Activated CD4-positive, alpha-beta memory T cell treated with anti-CD3 and anti-CD28 coated beads for 36 hours (primary cell): ENCODE measurements at regions of chr4 and their contacts with region 1.

Region 1: GRCh38 chr4:75686346-75686745 is 13.1 kb upstream of the G3BP2 start:
- DNase-seq: peak; percentile 47
- H3K4me3 Mint-ChIP-seq: no peak overlapping the region
- H3K27ac Mint-ChIP-seq: no peak overlapping the region
- H3K4me1 Mint-ChIP-seq: peaks cover 32% of the 10 kb centered on the region
- H3K27me3 Mint-ChIP-seq: no peaks in the 10 kb centered on the region

Region 2: GRCh38 chr4:75698162-75698962 is 12.0 kb after region 1 on chr4:
- CTCF ChIA-PET with region 1: no interaction called
- POLR2A ChIA-PET with region 1: no interaction called
- intact Hi-C with region 1: loop called (anchors 1 kb)
- DNase-seq: peak; percentile 48
- H3K4me3 Mint-ChIP-seq: no peak overlapping the region
- H3K27ac Mint-ChIP-seq: peak overlapping the region; percentile 64
- H3K4me1 Mint-ChIP-seq: peaks cover 23% of the 10 kb centered on the region
- H3K27me3 Mint-ChIP-seq: no peaks in the 10 kb centered on the region

Region 3: GRCh38 chr4:76430519-76431388 is 744.4 kb after region 1 on chr4:
- CTCF ChIA-PET with region 1: no interaction called
- POLR2A ChIA-PET with region 1: no interaction called
- intact Hi-C with region 1: no loop called
- DNase-seq: no peak
- H3K4me3 Mint-ChIP-seq: no peak overlapping the region
- H3K27ac Mint-ChIP-seq: no peak overlapping the region
- H3K4me1 Mint-ChIP-seq: no peaks in the 10 kb centered on the region
- H3K27me3 Mint-ChIP-seq: peaks cover 20% of the 10 kb centered on the region